B cell (primary cell): ENCODE measurements at regions of chr15 and their contacts with region 1.

Region 1: GRCh38 chr15:68559345-68560310 is 19.2 kb upstream of the CORO2B start:
- DNase-seq: peak; percentile 86
- ATAC-seq: peak; percentile 96
- H3K4me3 ChIP-seq: peak overlapping the region; percentile 33 to 58 (median 49)
- H3K4me3 Mint-ChIP-seq: peak overlapping the region; percentile 91
- H3K27ac ChIP-seq: no peak overlapping the region
- H3K27ac Mint-ChIP-seq: peak overlapping the region; percentile 46
- H3K4me1 ChIP-seq: peaks cover 25 to 34% of the 10 kb centered on the region in 2 donors
- H3K4me1 Mint-ChIP-seq: peaks cover 23% of the 10 kb centered on the region
- H3K27me3 ChIP-seq: peaks cover 0 to 30% (median 6%) of the 10 kb centered on the region in 4 experiments
- H3K27me3 Mint-ChIP-seq: peaks cover 43% of the 10 kb centered on the region
- CTCF ChIP-seq: peak; percentile 95

Region 2: DNA sequence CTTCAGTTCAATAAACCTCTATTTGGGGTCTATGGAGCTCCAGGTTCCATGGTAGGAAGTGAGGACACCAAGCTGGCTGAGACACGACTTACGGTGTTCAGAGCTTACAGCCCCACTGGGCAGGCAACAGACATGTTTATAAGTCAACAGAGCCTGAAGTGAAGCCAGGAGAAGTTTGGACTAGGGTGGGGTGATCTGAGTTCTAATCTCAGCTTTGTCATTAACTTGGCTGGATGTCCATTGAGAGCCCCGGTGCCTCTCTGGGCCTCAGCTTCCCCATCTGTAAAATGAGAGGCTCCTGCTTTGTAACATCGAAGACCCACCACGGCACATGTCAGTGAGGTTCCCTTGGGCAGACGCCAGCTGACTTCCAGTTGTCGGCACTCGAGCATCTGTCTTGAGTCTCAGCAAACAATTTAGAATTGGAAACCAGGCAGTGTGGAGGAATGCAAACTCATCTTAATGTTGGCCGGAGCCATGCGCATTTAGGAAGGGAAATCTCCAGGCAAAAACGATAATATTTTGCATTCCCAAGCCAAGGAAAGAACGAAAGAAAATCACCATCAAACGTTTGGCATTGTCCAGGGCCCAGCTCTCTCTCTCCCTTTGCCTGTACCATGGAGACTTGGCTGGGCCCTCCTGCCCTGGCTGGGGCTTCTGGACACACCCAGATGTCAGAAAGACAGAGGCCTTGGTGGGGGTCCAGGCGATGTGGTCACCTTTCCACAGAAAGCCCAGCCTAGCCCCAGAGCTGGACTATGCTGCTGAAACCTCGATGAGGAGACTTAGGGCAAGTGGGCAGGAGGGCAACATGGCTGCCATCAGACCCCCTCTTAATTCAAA is 146.0 kb before region 1 on chr15:
- CTCF ChIA-PET with region 1: no interaction called
- POLR2A ChIA-PET with region 1: no interaction called
- intact Hi-C with region 1: no loop called
- DNase-seq: no peak
- ATAC-seq: no peak
- H3K4me3 ChIP-seq: no peak overlapping the region
- H3K4me3 Mint-ChIP-seq: no peak overlapping the region
- H3K27ac ChIP-seq: no peak overlapping the region
- H3K27ac Mint-ChIP-seq: no peak overlapping the region
- H3K4me1 ChIP-seq: no peaks in the 10 kb centered on the region
- H3K4me1 Mint-ChIP-seq: no peaks in the 10 kb centered on the region
- H3K27me3 ChIP-seq: no peaks in the 10 kb centered on the region
- H3K27me3 Mint-ChIP-seq: peaks cover 3% of the 10 kb centered on the region
- CTCF ChIP-seq: no peak

Region 3: GRCh38 chr15:68536331-68537095 is 23.1 kb before region 1 on chr15:
- CTCF ChIA-PET with region 1: no interaction called
- POLR2A ChIA-PET with region 1: no interaction called
- intact Hi-C with region 1: no loop called
- DNase-seq: no peak
- ATAC-seq: no peak
- H3K4me3 ChIP-seq: no peak overlapping the region
- H3K4me3 Mint-ChIP-seq: no peak overlapping the region
- H3K27ac ChIP-seq: no peak overlapping the region
- H3K27ac Mint-ChIP-seq: no peak overlapping the region
- H3K4me1 ChIP-seq: no peaks in the 10 kb centered on the region
- H3K4me1 Mint-ChIP-seq: no peaks in the 10 kb centered on the region
- H3K27me3 ChIP-seq: peaks cover 0 to 3% (median 0%) of the 10 kb centered on the region in 4 experiments
- H3K27me3 Mint-ChIP-seq: no peaks in the 10 kb centered on the region
- CTCF ChIP-seq: no peak

Region 4: DNA sequence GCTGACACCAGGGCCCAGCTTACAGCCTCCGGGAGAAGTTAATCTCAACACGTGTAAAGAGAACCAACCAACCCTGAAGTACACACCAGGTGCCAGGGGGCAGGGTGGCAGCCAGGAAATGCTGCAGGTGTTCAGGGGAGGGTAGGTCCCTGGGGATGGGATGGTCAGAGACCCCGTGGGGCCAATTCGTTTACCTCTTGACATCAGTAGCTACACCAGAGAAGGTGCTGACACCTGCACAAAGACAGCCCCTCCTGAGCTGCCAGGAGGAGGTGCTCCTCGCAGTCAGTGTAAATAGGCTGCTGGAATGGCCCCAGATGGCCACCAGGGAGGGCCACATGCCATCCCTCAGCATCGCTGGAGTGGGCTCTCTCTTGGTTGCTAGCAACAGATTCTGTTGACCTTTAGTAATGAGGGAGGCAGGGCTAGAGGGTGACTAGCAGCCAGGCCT is 72.0 kb after region 1 on chr15:
- CTCF ChIA-PET with region 1: interaction called, 46 read pairs
- POLR2A ChIA-PET with region 1: interaction called, 3 read pairs
- intact Hi-C with region 1: loop called (anchors 5 kb)
- DNase-seq: peak; percentile 90
- ATAC-seq: peak; percentile 81
- H3K4me3 ChIP-seq: no peak overlapping the region
- H3K4me3 Mint-ChIP-seq: peak overlapping the region; percentile 80
- H3K27ac ChIP-seq: peak overlapping the region; percentile 86 to 95
- H3K27ac Mint-ChIP-seq: peak overlapping the region; percentile 97
- H3K4me1 ChIP-seq: peaks cover 96 to 98% of the 10 kb centered on the region in 2 donors
- H3K4me1 Mint-ChIP-seq: peaks cover 98% of the 10 kb centered on the region
- H3K27me3 ChIP-seq: no peaks in the 10 kb centered on the region
- H3K27me3 Mint-ChIP-seq: peaks cover 9% of the 10 kb centered on the region
- CTCF ChIP-seq: peak; percentile 21

Region 5: GRCh38 chr15:68650901-68651709 is 91.5 kb after region 1 on chr15:
- CTCF ChIA-PET with region 1: interaction called, 22 read pairs
- POLR2A ChIA-PET with region 1: no interaction called
- intact Hi-C with region 1: loop called (anchors 1 kb)
- DNase-seq: peak; percentile 65
- ATAC-seq: peak; percentile 58
- H3K4me3 ChIP-seq: no peak overlapping the region
- H3K4me3 Mint-ChIP-seq: no peak overlapping the region
- H3K27ac ChIP-seq: no peak overlapping the region
- H3K27ac Mint-ChIP-seq: no peak overlapping the region
- H3K4me1 ChIP-seq: no peaks in the 10 kb centered on the region
- H3K4me1 Mint-ChIP-seq: no peaks in the 10 kb centered on the region
- H3K27me3 ChIP-seq: peaks cover 0 to 6% (median 0%) of the 10 kb centered on the region in 4 experiments
- H3K27me3 Mint-ChIP-seq: peaks cover 8% of the 10 kb centered on the region
- CTCF ChIP-seq: peak; percentile 77

Region 6: GRCh38 chr15:68875377-68876116 is 315.9 kb after region 1 on chr15:
- CTCF ChIA-PET with region 1: interaction called, 243 read pairs
- POLR2A ChIA-PET with region 1: no interaction called
- intact Hi-C with region 1: loop called (anchors 1 kb)
- DNase-seq: peak; percentile 90
- ATAC-seq: peak; percentile 75
- H3K4me3 ChIP-seq: no peak overlapping the region
- H3K4me3 Mint-ChIP-seq: peak overlapping the region; percentile 50
- H3K27ac ChIP-seq: no peak overlapping the region
- H3K27ac Mint-ChIP-seq: no peak overlapping the region
- H3K4me1 ChIP-seq: peaks cover 4% of the 10 kb centered on the region in 2 donors
- H3K4me1 Mint-ChIP-seq: peaks cover 3% of the 10 kb centered on the region
- H3K27me3 ChIP-seq: peaks cover 0 to 16% (median 8%) of the 10 kb centered on the region in 4 experiments
- H3K27me3 Mint-ChIP-seq: peaks cover 19% of the 10 kb centered on the region
- CTCF ChIP-seq: peak; percentile 85